ENCODE measurements at regions of chr11 and their contacts with region 1.

Region 1: GRCh38 chr11:123110356-123110755 is 48.4 kb upstream of the HSPA8 start:
- DNase-seq: no peak
- ATAC-seq: no peak
- H3K4me3 Mint-ChIP-seq: no peak overlapping the region
- H3K27ac Mint-ChIP-seq: peak overlapping the region; percentile 63
- H3K4me1 Mint-ChIP-seq: peaks cover 3% of the 10 kb centered on the region
- H3K27me3 Mint-ChIP-seq: no peaks in the 10 kb centered on the region
- CTCF ChIP-seq: no peak

Region 2: DNA sequence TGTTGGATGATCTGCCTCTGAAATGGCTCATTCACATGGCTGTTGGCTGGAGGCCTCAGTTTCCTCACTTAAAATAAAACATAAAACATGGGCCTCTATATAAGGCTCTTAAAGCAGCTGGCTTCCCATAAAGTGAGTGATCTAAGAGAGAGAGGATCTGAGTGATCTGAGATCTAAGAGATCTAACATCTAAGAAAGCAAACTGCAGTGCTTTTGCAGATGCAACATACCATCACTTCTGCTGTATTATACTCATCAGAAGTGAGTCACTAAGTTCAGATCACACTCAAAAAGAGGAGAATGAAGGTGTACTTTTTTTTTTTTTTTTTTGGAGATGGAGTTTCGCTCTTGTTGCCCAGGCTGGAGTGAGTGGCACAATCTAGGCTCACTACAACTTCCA is 30.3 kb before region 1 on chr11:
- CTCF ChIA-PET with region 1: no interaction called
- POLR2A ChIA-PET with region 1: no interaction called
- intact Hi-C with region 1: no loop called
- DNase-seq: no peak
- ATAC-seq: peak; percentile 63
- H3K4me3 Mint-ChIP-seq: no peak overlapping the region
- H3K27ac Mint-ChIP-seq: no peak overlapping the region
- H3K4me1 Mint-ChIP-seq: peaks cover 25% of the 10 kb centered on the region
- H3K27me3 Mint-ChIP-seq: no peaks in the 10 kb centered on the region
- CTCF ChIP-seq: no peak

Region 3: DNA sequence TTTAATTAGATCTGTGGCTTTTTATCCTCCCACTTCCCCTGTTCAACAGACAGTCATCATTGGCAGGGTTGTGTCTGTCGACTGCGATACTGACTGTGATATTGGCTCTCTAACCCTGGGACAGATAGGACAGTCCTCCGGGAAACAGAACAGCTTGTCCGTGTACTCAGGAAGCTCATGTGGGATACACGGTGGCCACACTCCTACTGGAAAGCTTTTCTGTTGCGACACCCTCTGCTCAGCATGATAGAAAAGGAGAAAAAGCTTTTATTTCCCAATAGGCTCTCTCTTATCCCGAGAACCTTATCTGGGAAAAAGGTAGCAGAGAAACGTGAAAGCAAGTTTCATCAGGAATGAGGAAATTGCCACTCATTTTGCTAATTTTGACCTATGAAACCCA is 12.0 kb after region 1 on chr11:
- CTCF ChIA-PET with region 1: interaction called, 10 read pairs
- POLR2A ChIA-PET with region 1: interaction called, 3 read pairs
- intact Hi-C with region 1: no loop called
- DNase-seq: no peak
- ATAC-seq: no peak
- H3K4me3 Mint-ChIP-seq: no peak overlapping the region
- H3K27ac Mint-ChIP-seq: no peak overlapping the region
- H3K4me1 Mint-ChIP-seq: peaks cover 5% of the 10 kb centered on the region
- H3K27me3 Mint-ChIP-seq: peaks cover 1% of the 10 kb centered on the region
- CTCF ChIP-seq: no peak

Region 4: DNA sequence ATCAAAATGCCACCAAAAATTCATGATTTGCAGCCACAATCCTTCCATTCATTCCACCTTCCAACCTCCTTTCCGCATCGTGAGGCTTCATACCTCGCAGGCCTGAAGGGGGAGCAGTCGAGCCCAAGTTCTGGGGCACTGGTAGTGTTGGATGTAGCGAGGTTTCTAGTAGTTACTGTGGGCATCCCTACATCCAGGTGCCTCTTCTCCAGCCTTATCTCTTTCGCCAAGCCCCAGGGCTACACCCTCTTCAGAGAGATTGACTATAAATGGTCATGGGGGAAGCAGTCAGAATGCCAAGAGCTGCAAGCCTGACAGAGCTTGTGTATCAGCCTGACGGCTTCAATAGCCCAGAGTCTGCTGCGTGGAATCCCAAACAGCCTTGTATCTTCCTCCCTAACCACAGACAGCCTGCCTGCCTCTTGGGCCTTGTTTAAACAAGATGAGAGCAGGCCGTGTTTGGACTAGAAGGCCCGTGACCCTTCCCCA is 55.8 kb after region 1 on chr11:
- CTCF ChIA-PET with region 1: interaction called, 10 read pairs
- POLR2A ChIA-PET with region 1: no interaction called
- intact Hi-C with region 1: no loop called
- DNase-seq: peak; percentile 42
- ATAC-seq: no peak
- H3K4me3 Mint-ChIP-seq: no peak overlapping the region
- H3K27ac Mint-ChIP-seq: no peak overlapping the region
- H3K4me1 Mint-ChIP-seq: no peaks in the 10 kb centered on the region
- H3K27me3 Mint-ChIP-seq: peaks cover 2% of the 10 kb centered on the region
- CTCF ChIP-seq: peak; percentile 55

Region 5: GRCh38 chr11:123235117-123235655 is 124.8 kb after region 1 on chr11:
- CTCF ChIA-PET with region 1: interaction called, 41 read pairs
- POLR2A ChIA-PET with region 1: no interaction called
- intact Hi-C with region 1: no loop called
- DNase-seq: peak; percentile 60
- ATAC-seq: no peak
- H3K4me3 Mint-ChIP-seq: no peak overlapping the region
- H3K27ac Mint-ChIP-seq: no peak overlapping the region
- H3K4me1 Mint-ChIP-seq: peaks cover 16% of the 10 kb centered on the region
- H3K27me3 Mint-ChIP-seq: no peaks in the 10 kb centered on the region
- CTCF ChIP-seq: no peak

Region 6: DNA sequence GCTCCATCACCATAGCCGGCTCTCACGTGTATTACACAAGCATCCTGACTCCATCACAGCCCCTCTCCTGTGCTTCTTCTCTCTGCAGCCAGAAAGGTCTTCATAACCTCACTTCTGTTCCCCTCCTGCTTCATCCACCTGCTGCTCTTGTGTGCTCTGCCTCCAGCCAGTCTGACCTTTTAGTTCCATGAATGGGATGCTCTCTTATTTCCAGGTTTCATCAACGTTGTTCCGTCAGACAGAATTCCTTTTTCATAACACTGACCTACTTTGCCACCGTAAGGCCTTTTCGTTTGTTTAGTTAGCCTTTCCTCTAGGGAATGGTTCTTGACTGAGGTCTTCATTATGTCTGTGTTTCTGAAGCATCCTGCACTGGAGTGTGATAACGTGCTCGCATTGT is 338.5 kb after region 1 on chr11:
- CTCF ChIA-PET with region 1: no interaction called
- POLR2A ChIA-PET with region 1: no interaction called
- intact Hi-C with region 1: no loop called
- DNase-seq: no peak
- ATAC-seq: no peak
- H3K4me3 Mint-ChIP-seq: no peak overlapping the region
- H3K27ac Mint-ChIP-seq: no peak overlapping the region
- H3K4me1 Mint-ChIP-seq: peaks cover 33% of the 10 kb centered on the region
- H3K27me3 Mint-ChIP-seq: no peaks in the 10 kb centered on the region
- CTCF ChIP-seq: no peak

Region 7: GRCh38 chr11:123478352-123478987 is 368.1 kb after region 1 on chr11:
- CTCF ChIA-PET with region 1: interaction called, 12 read pairs
- POLR2A ChIA-PET with region 1: no interaction called
- intact Hi-C with region 1: no loop called
- DNase-seq: peak; percentile 25
- ATAC-seq: peak; percentile 35
- H3K4me3 Mint-ChIP-seq: peak overlapping the region; percentile 7
- H3K27ac Mint-ChIP-seq: peak overlapping the region; percentile 14
- H3K4me1 Mint-ChIP-seq: peaks cover 42% of the 10 kb centered on the region
- H3K27me3 Mint-ChIP-seq: no peaks in the 10 kb centered on the region
- CTCF ChIP-seq: peak; percentile 86